HepG2 (cell line): ENCODE measurements at regions of chr2 and their contacts with region 1.

Region 1: DNA sequence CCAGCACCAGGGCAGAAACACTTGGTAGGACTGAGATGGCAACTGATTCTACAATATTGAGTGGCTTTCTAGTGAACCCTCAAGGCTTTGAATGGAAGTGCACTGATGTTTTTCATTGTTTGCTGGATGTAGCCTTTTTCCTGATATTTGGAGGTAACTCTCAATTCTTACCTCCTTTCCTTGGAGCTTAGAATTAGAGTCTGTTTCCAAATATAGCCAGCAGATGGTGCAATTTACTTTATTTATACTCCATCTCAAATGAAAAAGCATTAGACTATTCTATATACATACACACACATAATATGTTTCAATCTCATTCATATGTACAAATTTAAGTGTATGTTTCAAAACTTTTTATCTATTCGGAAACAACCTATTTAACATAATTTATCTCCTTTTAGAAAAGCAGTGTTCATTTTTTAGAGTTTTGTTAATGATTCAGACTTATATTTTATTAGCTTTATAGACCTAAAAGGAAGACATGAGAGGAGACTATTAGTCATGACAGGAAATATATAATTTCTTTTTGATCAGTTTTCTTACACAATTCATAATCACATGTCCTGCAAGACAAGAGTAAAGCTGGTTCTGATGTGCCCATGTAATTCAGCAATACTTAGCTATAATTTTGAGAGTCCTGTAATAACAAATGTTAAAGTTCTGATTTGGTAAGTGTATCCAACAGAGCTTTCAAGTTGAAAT is 124.8 kb downstream of the NUP35 start:
- DNase-seq: peak; percentile 15
- ATAC-seq: peak; percentile 57
- H3K4me3 ChIP-seq: no peak overlapping the region
- H3K27ac ChIP-seq: no peak overlapping the region
- H3K4me1 ChIP-seq: no peaks in the 10 kb centered on the region
- H3K27me3 ChIP-seq: no peaks in the 10 kb centered on the region
- CTCF ChIP-seq: peak; percentile 53
- EP300 ChIP-seq: no peak
- POLR2A ChIP-seq: no peak
- RAD21 ChIP-seq: no peak

Region 2: GRCh38 chr2:183070942-183071844 is 177.8 kb before region 1 on chr2:
- CTCF ChIA-PET with region 1: no interaction called
- POLR2A ChIA-PET with region 1: no interaction called
- in situ Hi-C with region 1: no loop called
- intact Hi-C with region 1: loop called (anchors 2 kb)
- DNase-seq: peak; percentile 67
- ATAC-seq: peak; percentile 96
- H3K4me3 ChIP-seq: peak overlapping the region in 1 of 3 experiments; percentile 44; a peak in 2 of 6 replicates
- H3K27ac ChIP-seq: no peak overlapping the region
- H3K4me1 ChIP-seq: peaks cover 6% of the 10 kb centered on the region; the same call in 1 of the 2 replicates
- H3K27me3 ChIP-seq: peaks cover 0 to 26% of the 10 kb centered on the region in 2 experiments; a peak in 2 of 5 replicates
- CTCF ChIP-seq: peak; percentile 96
- EP300 ChIP-seq: no peak
- POLR2A ChIP-seq: no peak
- RAD21 ChIP-seq: peak; percentile 75

Region 3: DNA sequence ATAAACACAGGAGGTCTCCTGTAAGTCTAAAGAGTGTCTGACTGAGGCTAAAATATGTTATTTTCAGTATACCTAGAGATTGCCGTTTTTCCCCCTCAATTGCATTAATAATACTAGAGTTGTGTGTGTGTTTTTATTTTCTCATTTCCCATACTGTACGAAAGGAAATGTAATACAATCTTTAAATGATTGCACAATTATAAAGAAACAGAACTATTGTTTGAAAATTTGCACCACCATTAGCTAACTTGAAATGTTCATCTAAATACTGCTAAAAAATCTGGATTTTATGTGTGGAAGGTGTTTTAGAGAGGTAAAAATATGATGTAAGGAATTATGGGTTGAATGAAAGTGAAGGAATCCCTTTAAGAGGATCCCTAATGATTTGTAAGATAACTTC is 13.7 kb before region 1 on chr2:
- CTCF ChIA-PET with region 1: no interaction called
- POLR2A ChIA-PET with region 1: no interaction called
- in situ Hi-C with region 1: no loop called
- intact Hi-C with region 1: no loop called
- DNase-seq: no peak
- ATAC-seq: no peak
- H3K4me3 ChIP-seq: no peak overlapping the region
- H3K27ac ChIP-seq: no peak overlapping the region
- H3K4me1 ChIP-seq: no peaks in the 10 kb centered on the region
- H3K27me3 ChIP-seq: no peaks in the 10 kb centered on the region
- CTCF ChIP-seq: no peak
- EP300 ChIP-seq: no peak
- POLR2A ChIP-seq: no peak
- RAD21 ChIP-seq: no peak

Region 4: DNA sequence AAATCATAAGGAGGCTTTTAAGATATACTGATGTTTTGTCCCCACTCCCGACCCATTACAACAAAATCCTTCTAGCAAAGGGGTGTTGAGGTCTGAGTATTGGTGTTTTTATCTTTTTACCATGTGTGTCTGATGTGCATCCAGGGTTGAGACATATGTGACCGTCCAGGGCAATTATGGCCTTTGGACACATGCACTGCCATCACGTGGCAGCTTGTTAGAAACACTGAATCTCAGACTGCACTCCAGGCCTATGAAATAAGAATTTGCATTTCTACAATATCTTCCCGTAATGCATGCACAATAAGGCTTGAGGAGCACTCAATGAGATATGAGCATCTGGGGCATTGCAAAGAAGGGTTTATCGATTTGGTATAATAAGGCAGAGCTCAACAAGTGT is 1114.2 kb after region 1 on chr2:
- CTCF ChIA-PET with region 1: no interaction called
- POLR2A ChIA-PET with region 1: no interaction called
- in situ Hi-C with region 1: no loop called
- intact Hi-C with region 1: loop called (anchors 1 kb)
- DNase-seq: peak; percentile 20
- ATAC-seq: peak; percentile 94
- H3K4me3 ChIP-seq: no peak overlapping the region
- H3K27ac ChIP-seq: no peak overlapping the region
- H3K4me1 ChIP-seq: no peaks in the 10 kb centered on the region
- H3K27me3 ChIP-seq: no peaks in the 10 kb centered on the region
- CTCF ChIP-seq: peak; percentile 49
- EP300 ChIP-seq: no peak
- POLR2A ChIP-seq: no peak
- RAD21 ChIP-seq: no peak